Calu3 (cell line): ENCODE measurements at regions of chr3 and their contacts with region 1.

Region 1: GRCh38 chr3:155352900-155353490 is 59.5 kb upstream of the STRIT1 start:
- DNase-seq: no peak
- H3K4me3 Mint-ChIP-seq: no peak overlapping the region
- H3K27ac Mint-ChIP-seq: no peak overlapping the region
- H3K4me1 Mint-ChIP-seq: no peaks in the 10 kb centered on the region
- H3K27me3 Mint-ChIP-seq: no peaks in the 10 kb centered on the region
- CTCF ChIP-seq: peak; percentile 77

Region 2: GRCh38 chr3:155185631-155186071 is 167.3 kb before region 1 on chr3:
- CTCF ChIA-PET with region 1: no interaction called
- intact Hi-C with region 1: no loop called
- DNase-seq: no peak
- H3K4me3 Mint-ChIP-seq: no peak overlapping the region
- H3K27ac Mint-ChIP-seq: no peak overlapping the region
- H3K4me1 Mint-ChIP-seq: peaks cover 9% of the 10 kb centered on the region
- H3K27me3 Mint-ChIP-seq: no peaks in the 10 kb centered on the region
- CTCF ChIP-seq: no peak

Region 3: GRCh38 chr3:155252535-155252934 is 100.5 kb before region 1 on chr3:
- CTCF ChIA-PET with region 1: no interaction called
- intact Hi-C with region 1: no loop called
- DNase-seq: no peak
- H3K4me3 Mint-ChIP-seq: no peak overlapping the region
- H3K27ac Mint-ChIP-seq: no peak overlapping the region
- H3K4me1 Mint-ChIP-seq: peaks cover 9% of the 10 kb centered on the region
- H3K27me3 Mint-ChIP-seq: no peaks in the 10 kb centered on the region
- CTCF ChIP-seq: no peak

Region 4: GRCh38 chr3:155382396-155383042 is 29.5 kb after region 1 on chr3:
- CTCF ChIA-PET with region 1: interaction called, 3 read pairs
- intact Hi-C with region 1: loop called (anchors 2 kb)
- DNase-seq: peak; percentile 89
- H3K4me3 Mint-ChIP-seq: no peak overlapping the region
- H3K27ac Mint-ChIP-seq: no peak overlapping the region
- H3K4me1 Mint-ChIP-seq: no peaks in the 10 kb centered on the region
- H3K27me3 Mint-ChIP-seq: no peaks in the 10 kb centered on the region
- CTCF ChIP-seq: peak; percentile 93

Region 5: DNA sequence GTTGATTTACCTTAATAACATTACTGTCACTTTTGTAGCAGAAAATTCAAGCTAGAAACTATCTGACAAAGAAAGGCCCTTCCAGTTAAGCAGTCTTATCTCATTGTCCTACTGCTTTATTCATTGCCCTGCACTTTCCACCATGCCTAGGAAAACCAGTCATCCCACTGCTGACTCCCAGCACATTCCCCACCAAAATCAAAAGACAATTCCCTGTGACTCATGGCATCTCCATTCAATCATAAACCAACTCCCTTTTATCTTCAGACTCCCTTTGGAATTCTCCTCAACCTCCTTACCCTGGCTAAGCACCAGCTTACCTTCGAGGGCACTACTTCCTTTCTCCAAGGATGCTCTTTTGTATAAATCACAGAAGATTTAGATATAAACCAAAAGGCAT is 207.6 kb after region 1 on chr3:
- CTCF ChIA-PET with region 1: no interaction called
- intact Hi-C with region 1: no loop called
- DNase-seq: no peak
- H3K4me3 Mint-ChIP-seq: no peak overlapping the region
- H3K27ac Mint-ChIP-seq: no peak overlapping the region
- H3K4me1 Mint-ChIP-seq: peaks cover 22% of the 10 kb centered on the region
- H3K27me3 Mint-ChIP-seq: no peaks in the 10 kb centered on the region
- CTCF ChIP-seq: no peak

Region 6: DNA sequence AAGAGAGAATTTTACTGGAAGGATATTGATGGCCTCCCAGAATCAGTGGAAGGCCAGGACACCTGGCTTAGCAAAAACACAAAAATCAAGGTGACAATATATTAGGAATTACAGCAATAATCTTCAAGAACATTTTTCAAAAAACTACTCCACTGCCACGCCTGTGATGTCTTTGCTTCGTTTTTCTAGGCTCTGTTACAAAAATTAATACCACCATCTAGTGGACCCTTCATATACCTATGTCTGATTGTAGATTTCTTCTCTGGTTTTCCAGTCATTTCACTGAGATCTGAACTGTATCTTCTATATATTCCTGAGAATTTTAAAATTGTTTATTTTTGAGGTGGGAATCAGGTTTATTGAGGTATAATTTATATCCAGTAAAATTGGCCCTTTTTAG is 506.9 kb after region 1 on chr3:
- CTCF ChIA-PET with region 1: no interaction called
- intact Hi-C with region 1: loop called (anchors 1 kb)
- DNase-seq: no peak
- H3K4me3 Mint-ChIP-seq: no peak overlapping the region
- H3K27ac Mint-ChIP-seq: peak overlapping the region; percentile 23
- H3K4me1 Mint-ChIP-seq: peaks cover 3% of the 10 kb centered on the region
- H3K27me3 Mint-ChIP-seq: no peaks in the 10 kb centered on the region
- CTCF ChIP-seq: peak; percentile 14